ENCODE measurements at regions of chr6 and their contacts with region 1.

Region 1: GRCh38 chr6:35727935-35728682 is 8.7 kb upstream of the ARMC12 start:
- DNase-seq: peak; percentile 84
- H3K4me3 ChIP-seq: peak overlapping the region; percentile 34 to 73 (median 47)
- H3K27ac ChIP-seq: peak overlapping the region; percentile 99 to 100 (median 100)
- H3K4me1 ChIP-seq: peaks cover 83 to 100% (median 87%) of the 10 kb centered on the region in 3 donors
- H3K27me3 ChIP-seq: no peaks in the 10 kb centered on the region
- CTCF ChIP-seq: peak in 1 of 6 experiments; percentile 17
- POLR2A ChIP-seq: peak in 2 of 4 donors; percentile 48 to 86

Region 2: DNA sequence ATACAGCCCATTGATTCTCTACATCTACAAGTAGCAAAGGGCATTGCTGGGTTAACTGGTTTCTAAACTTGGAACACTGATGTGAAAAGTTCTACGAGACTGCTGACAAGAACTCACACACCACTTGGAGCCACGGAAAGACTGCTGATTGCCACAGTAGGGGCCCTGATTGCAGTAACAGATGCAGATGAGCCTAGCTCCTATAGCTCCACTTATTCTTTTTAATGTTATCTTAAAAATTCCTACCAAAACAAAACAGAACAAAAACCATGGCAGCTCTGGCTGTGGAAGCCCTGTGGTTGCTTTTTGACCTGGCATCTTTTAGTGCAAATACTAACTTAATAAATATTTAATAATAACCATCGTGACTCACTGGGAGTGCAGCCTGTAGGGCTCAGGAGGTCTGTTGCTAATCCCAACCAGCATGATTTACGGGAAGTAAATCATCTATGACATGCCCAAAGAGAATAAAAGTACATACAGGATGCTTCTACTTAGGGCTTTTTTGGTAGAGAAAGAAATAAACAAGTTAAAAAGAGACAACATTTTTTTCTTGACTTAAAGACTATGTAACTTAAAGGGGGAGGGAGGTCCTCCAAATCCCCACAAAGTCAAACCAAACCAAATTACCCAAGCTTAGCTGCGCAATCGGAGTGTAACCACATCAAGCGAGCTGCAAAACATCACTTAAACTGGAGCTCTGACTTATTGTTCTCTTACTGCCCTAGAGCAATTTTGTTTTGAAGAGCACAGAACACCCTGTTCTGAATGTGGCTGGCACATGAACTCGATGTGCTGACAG is 126.6 kb before region 1 on chr6:
- intact Hi-C with region 1: loop called (anchors 5 kb)
- DNase-seq: no peak
- H3K4me3 ChIP-seq: peak overlapping the region in 3 of 4 donors; percentile 3 to 48 (median 4)
- H3K27ac ChIP-seq: peak overlapping the region; percentile 86 to 97 (median 94)
- H3K4me1 ChIP-seq: peaks cover 48 to 100% (median 83%) of the 10 kb centered on the region in 3 donors
- H3K27me3 ChIP-seq: no peaks in the 10 kb centered on the region
- CTCF ChIP-seq: peak in 1 of 6 experiments; percentile 17
- POLR2A ChIP-seq: no peak

Region 3: GRCh38 chr6:35691027-35691824 is 36.9 kb before region 1 on chr6:
- intact Hi-C with region 1: loop called (anchors 5 kb)
- DNase-seq: no peak
- H3K4me3 ChIP-seq: no peak overlapping the region
- H3K27ac ChIP-seq: peak overlapping the region; percentile 70 to 99 (median 93)
- H3K4me1 ChIP-seq: peaks cover 19 to 37% (median 22%) of the 10 kb centered on the region in 3 donors
- H3K27me3 ChIP-seq: no peaks in the 10 kb centered on the region
- CTCF ChIP-seq: no peak
- POLR2A ChIP-seq: no peak

Region 4: GRCh38 chr6:36094753-36095496 is 366.8 kb after region 1 on chr6:
- intact Hi-C with region 1: no loop called
- DNase-seq: peak; percentile 14
- H3K4me3 ChIP-seq: no peak overlapping the region
- H3K27ac ChIP-seq: peak overlapping the region; percentile 6 to 79 (median 55)
- H3K4me1 ChIP-seq: peaks cover 0 to 18% (median 0%) of the 10 kb centered on the region in 3 donors
- H3K27me3 ChIP-seq: no peaks in the 10 kb centered on the region
- CTCF ChIP-seq: peak; percentile 95 to 98 (median 96)
- POLR2A ChIP-seq: no peak